ENCODE measurements at regions of chr4 and their contacts with region 1.

Region 1: GRCh38 chr4:108109997-108110416 is 58.7 kb downstream of the LEF1 start:
- DNase-seq: peak; percentile 57
- H3K4me3 Mint-ChIP-seq: peak overlapping the region; percentile 81
- H3K27ac Mint-ChIP-seq: peak overlapping the region; percentile 90
- H3K4me1 Mint-ChIP-seq: peaks cover 84% of the 10 kb centered on the region
- H3K27me3 Mint-ChIP-seq: no peaks in the 10 kb centered on the region

Region 2: GRCh38 chr4:108053251-108053711 is 56.7 kb before region 1 on chr4:
- intact Hi-C with region 1: loop called (anchors 1 kb)
- DNase-seq: no peak
- H3K4me3 Mint-ChIP-seq: peak overlapping the region; percentile 31
- H3K27ac Mint-ChIP-seq: peak overlapping the region; percentile 81
- H3K4me1 Mint-ChIP-seq: peaks cover 62% of the 10 kb centered on the region
- H3K27me3 Mint-ChIP-seq: no peaks in the 10 kb centered on the region

Region 3: DNA sequence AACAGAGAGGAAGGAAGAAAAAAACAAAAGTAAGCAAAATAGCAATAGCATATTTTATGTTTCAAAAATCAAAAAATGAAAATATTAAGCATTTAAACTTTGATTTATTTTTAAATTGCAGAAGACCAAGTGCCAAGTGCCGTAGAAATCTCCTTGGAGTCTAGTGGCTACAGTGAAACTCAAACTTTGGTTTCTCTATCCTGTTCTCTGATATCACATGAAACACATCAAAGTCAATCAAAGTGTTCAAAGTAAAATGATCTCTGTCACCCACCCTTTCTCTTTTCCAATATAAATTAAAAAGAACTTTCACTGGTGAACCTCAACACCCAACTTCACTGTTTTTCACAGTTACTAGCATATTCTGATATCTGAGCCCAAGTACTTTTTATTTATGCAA is 39.2 kb before region 1 on chr4:
- intact Hi-C with region 1: loop called (anchors 2 kb)
- DNase-seq: peak; percentile 56
- H3K4me3 Mint-ChIP-seq: peak overlapping the region; percentile 3
- H3K27ac Mint-ChIP-seq: peak overlapping the region; percentile 41
- H3K4me1 Mint-ChIP-seq: peaks cover 63% of the 10 kb centered on the region
- H3K27me3 Mint-ChIP-seq: no peaks in the 10 kb centered on the region

Region 4: DNA sequence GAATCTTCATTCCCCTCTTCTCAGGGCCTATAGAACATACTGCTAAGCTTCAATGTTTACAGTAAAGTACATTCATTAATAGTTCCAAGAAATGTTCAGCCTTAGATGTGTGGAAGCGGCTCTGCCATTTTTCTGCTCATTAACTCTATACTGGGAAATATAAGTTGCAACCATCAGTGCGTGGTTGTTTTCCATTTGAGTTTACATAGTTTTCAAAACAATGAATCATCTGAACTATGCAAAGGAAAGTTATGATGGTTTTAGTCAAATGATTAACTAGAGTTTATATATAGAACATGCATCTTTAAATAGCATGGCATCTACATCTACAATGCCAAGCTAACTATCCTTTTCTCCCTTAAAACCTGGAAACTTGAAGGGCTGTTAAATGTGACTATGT is 29.1 kb after region 1 on chr4:
- intact Hi-C with region 1: loop called (anchors 1 kb)
- DNase-seq: peak; percentile 58
- H3K4me3 Mint-ChIP-seq: peak overlapping the region; percentile 84
- H3K27ac Mint-ChIP-seq: peak overlapping the region; percentile 97
- H3K4me1 Mint-ChIP-seq: peaks cover 84% of the 10 kb centered on the region
- H3K27me3 Mint-ChIP-seq: no peaks in the 10 kb centered on the region

Region 5: GRCh38 chr4:108166441-108167315 is 56.7 kb after region 1 on chr4:
- intact Hi-C with region 1: loop called (anchors 2 kb)
- DNase-seq: peak; percentile 90
- H3K4me3 Mint-ChIP-seq: peak overlapping the region; percentile 97
- H3K27ac Mint-ChIP-seq: peak overlapping the region; percentile 94
- H3K4me1 Mint-ChIP-seq: peaks cover 55% of the 10 kb centered on the region
- H3K27me3 Mint-ChIP-seq: peaks cover 14% of the 10 kb centered on the region

Region 6: DNA sequence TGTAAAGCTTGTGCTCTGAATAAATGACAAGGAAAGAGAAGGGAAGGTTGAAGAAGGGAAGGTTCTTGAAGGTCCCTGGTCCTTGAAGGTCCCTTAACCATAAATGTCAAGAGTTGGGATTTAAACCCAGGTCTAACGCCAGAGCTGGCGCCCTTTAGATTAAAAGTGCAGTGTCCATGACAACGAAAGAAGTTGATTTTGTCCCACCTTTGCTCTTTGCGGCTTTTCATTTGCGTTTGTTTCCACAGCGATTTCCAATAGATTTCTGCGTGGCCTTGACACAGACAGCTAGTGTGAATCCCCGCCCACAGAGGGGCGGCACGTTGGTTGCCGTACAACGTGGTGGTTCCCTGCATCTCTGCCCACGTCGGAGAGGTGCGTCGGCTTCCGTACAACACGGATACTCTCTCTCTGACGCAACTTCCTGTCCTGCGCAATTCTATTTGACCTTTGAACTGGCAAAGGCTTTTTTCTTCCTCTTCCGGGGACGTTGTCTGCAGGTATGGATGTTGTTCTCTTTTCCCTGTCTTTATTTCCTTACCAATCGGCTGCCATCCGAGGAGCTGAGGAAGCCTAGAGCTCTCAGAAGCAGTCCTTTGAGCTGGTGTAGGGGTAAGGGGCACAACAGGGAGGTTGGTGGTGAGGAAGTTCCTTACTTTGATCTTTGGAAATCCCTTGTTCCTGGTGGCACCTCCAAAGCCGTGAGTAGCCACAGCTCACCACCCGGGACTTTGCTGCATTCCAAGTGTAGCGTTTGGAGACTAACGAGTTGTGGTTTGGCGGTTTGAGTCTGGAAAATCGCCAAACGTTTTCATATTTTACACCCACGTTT is 510.3 kb after region 1 on chr4 and contains the start of gene RPL34:
- intact Hi-C with region 1: loop called (anchors 1 kb)
- DNase-seq: peak; percentile 99
- H3K4me3 Mint-ChIP-seq: peak within 1 kb of the TSS; percentile 93
- H3K27ac Mint-ChIP-seq: peak within 1 kb of the TSS; percentile 96
- H3K4me1 Mint-ChIP-seq: peaks cover 40% of the 10 kb centered on the region
- H3K27me3 Mint-ChIP-seq: no peaks in the 10 kb centered on the region
- total RNA-seq, gene RPL34: 1,411 and 1,425 TPM in 2 replicates

Measured in activated CD4-positive, alpha-beta T cell treated with anti-CD3 and anti-CD28 coated beads, Interleukin-2, amount 10 ng/mL, durations not matched to agents 24 days and 14 days (primary cell).